MCF 10A (cell line): ENCODE measurements at regions of chr1 and their contacts with region 1.

Region 1: DNA sequence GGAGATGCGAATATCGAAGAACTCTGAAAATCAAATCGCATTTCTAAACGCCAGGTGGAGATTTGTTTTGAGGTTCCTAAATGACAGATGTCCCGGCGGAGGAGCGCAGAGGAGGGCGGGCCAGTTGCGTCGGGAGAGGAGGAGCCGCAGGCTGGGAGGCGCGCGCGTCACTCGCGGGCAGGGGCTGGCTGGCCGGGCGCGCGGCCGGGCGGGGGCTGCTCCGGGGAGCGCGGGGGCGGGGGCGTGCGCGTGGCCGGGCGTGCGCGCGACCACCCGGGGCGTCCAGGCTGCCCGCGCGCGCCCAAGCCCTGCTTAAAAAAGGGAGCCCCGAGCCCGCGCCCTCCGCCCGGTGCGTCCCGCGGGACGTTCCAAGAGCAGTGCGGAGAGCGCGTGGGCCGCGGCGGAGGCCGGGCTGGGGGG is 47.3 kb downstream of the H3-3A start:
- DNase-seq: peak; percentile 96
- H3K4me3 Mint-ChIP-seq: peak overlapping the region; percentile 83
- H3K27ac Mint-ChIP-seq: peak overlapping the region; percentile 88
- H3K4me1 Mint-ChIP-seq: peaks cover 23% of the 10 kb centered on the region
- H3K27me3 Mint-ChIP-seq: no peaks in the 10 kb centered on the region
- CTCF ChIP-seq: peak; percentile 27

Region 2: GRCh38 chr1:225182716-225183115 is 927.1 kb before region 1 on chr1:
- CTCF ChIA-PET with region 1: no interaction called
- POLR2A ChIA-PET with region 1: no interaction called
- intact Hi-C with region 1: no loop called
- DNase-seq: no peak
- H3K4me3 Mint-ChIP-seq: no peak overlapping the region
- H3K27ac Mint-ChIP-seq: no peak overlapping the region
- H3K4me1 Mint-ChIP-seq: no peaks in the 10 kb centered on the region
- H3K27me3 Mint-ChIP-seq: no peaks in the 10 kb centered on the region
- CTCF ChIP-seq: no peak

Region 3: GRCh38 chr1:226074046-226074445 is 35.8 kb before region 1 on chr1:
- CTCF ChIA-PET with region 1: interaction called, 5 read pairs
- POLR2A ChIA-PET with region 1: interaction called, 10 read pairs
- intact Hi-C with region 1: no loop called
- DNase-seq: no peak
- H3K4me3 Mint-ChIP-seq: no peak overlapping the region
- H3K27ac Mint-ChIP-seq: peak overlapping the region; percentile 33
- H3K4me1 Mint-ChIP-seq: peaks cover 16% of the 10 kb centered on the region
- H3K27me3 Mint-ChIP-seq: no peaks in the 10 kb centered on the region
- CTCF ChIP-seq: no peak

Region 4: DNA sequence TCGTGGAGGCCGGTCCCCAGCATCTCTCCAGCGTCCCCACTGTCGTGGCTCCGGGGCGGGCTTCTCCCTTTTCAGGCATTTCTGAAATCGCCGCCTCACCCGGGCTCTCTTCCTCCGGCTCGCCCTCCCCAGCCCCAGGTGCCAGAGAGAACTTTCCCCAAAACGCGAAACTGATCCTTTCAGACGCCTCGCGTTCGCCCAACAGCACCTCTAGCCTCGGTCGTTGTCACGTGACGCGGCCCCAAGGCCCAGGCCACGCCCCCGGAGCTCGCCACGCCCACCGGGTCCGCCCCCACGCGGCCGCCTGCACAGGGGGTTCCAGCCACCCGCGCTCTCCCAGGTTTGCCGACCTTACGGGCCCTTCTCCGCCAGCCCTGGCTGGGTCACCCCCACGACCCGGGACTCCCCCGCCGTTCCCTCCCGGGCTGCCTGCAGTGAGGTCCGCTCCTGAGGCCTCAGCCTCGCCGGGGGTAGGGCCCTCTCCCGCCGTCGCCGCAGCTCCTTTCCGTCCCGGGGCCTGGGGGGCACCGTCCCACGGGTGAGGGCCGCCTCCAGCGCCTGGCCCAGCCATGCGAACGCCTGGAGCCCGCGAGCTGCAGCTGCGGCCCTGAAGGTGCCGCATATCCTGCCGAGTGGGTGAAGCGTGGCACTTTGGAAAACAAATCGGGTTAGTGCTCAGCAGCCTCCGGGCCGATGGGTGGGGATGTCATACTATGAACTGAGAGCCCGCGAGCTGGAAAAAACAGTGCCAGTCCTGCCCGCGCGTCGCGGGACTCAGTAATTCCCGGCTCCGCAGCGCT is 26.3 kb before region 1 on chr1:
- CTCF ChIA-PET with region 1: interaction called, 5 read pairs
- POLR2A ChIA-PET with region 1: interaction called, 129 read pairs
- intact Hi-C with region 1: loop called (anchors 1 kb)
- DNase-seq: peak; percentile 97
- H3K4me3 Mint-ChIP-seq: peak overlapping the region; percentile 83
- H3K27ac Mint-ChIP-seq: peak overlapping the region; percentile 24
- H3K4me1 Mint-ChIP-seq: peaks cover 6% of the 10 kb centered on the region
- H3K27me3 Mint-ChIP-seq: no peaks in the 10 kb centered on the region
- CTCF ChIP-seq: no peak

Region 5: DNA sequence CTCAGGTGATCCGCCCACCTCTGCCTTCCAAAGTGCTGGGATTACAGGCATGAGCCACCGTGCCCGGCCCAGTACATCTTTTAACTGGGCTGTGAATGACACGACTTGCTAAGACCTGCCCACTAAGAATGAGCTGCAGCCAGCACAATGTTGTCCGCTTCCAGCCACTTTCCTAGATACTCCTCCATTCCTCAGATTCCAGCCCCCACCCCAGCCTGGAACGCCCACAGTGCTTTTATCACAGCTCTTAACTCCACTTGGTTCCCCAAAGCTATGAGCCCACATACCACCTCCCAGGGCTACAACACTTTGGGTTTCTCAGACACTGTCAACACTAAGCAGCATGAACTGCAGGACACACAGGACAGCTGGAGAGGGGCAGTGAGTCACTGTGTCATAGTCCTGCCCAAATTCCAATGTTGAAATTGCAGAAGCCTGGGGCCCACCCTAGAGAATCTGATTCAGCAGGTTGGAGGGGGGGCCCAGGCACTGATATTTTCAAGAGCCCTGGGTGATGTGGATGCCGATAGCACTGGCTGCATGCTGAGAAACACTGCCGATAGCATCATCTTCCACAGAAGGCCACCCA is 18.7 kb after region 1 on chr1:
- CTCF ChIA-PET with region 1: interaction called, 75 read pairs
- POLR2A ChIA-PET with region 1: interaction called, 45 read pairs
- intact Hi-C with region 1: no loop called
- DNase-seq: peak; percentile 57
- H3K4me3 Mint-ChIP-seq: peak overlapping the region; percentile 21
- H3K27ac Mint-ChIP-seq: peak overlapping the region; percentile 73
- H3K4me1 Mint-ChIP-seq: peaks cover 42% of the 10 kb centered on the region
- H3K27me3 Mint-ChIP-seq: no peaks in the 10 kb centered on the region
- CTCF ChIP-seq: no peak